ENCODE measurements at regions of chr11 and their contacts with region 1.

Region 1: GRCh38 chr11:86938900-86939880 is 16.0 kb downstream of the FZD4 start:
- DNase-seq: no peak
- H3K4me3 ChIP-seq: no peak overlapping the region
- H3K27ac ChIP-seq: no peak overlapping the region
- H3K4me1 ChIP-seq: no peaks in the 10 kb centered on the region
- H3K27me3 ChIP-seq: no peaks in the 10 kb centered on the region
- CTCF ChIP-seq: peak; percentile 62

Region 2: DNA sequence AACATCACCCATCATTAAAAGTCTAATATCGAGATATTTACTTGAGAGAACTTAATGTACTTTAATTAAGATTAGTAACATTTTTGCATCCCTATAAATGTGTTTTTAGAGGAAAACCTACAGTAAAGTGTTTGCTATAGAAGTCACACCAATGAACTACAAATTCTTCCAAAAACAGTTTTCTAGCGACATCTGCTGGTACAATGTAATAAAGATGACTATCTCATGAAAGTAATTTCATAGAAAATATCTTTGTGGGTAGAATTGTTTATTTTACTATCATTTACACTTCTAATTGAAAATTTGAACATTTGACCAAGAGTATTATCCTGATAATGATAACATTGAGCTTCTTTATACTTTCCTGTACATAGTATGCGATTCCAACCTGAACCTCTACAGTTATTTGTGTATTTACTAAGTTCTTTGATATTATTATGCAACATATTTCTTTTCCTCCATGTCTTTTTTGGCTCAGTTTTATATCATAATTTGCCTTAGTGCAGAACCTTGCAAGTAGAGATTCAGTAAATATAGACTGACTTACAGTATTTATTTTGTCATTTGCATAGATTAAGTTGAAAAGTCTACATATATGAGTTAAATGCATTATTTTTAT is 351.2 kb after region 1 on chr11:
- intact Hi-C with region 1: loop called (anchors 5 kb)
- DNase-seq: no peak
- H3K4me3 ChIP-seq: no peak overlapping the region
- H3K27ac ChIP-seq: no peak overlapping the region
- H3K4me1 ChIP-seq: no peaks in the 10 kb centered on the region
- H3K27me3 ChIP-seq: no peaks in the 10 kb centered on the region
- CTCF ChIP-seq: peak; percentile 65

Region 3: DNA sequence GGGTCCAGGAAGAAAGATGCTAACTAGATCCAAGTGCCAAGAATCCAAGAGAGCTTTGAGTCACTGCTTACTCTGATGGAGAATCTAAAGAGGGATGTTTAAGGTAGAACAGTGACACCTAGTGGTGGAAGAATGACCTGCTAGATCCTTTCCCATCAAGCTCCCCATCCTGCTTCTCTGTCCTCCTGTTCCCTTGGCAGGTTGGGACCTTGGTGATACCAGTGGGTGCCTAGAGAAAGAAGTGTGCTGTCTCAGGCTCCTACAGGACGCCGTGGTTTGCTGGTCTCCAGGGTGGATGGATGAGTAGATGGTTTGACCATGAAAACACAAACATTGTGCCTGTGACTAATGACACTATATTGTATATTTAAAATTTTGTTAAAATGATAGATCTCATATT is 482.2 kb after region 1 on chr11:
- intact Hi-C with region 1: loop called (anchors 10 kb)
- DNase-seq: peak; percentile 57
- H3K4me3 ChIP-seq: no peak overlapping the region
- H3K27ac ChIP-seq: no peak overlapping the region
- H3K4me1 ChIP-seq: no peaks in the 10 kb centered on the region
- H3K27me3 ChIP-seq: no peaks in the 10 kb centered on the region
- CTCF ChIP-seq: peak; percentile 75

Measured in colonic mucosa (tissue), 4 donors.